ENCODE measurements at regions of chr6 and their contacts with region 1.

Region 1: DNA sequence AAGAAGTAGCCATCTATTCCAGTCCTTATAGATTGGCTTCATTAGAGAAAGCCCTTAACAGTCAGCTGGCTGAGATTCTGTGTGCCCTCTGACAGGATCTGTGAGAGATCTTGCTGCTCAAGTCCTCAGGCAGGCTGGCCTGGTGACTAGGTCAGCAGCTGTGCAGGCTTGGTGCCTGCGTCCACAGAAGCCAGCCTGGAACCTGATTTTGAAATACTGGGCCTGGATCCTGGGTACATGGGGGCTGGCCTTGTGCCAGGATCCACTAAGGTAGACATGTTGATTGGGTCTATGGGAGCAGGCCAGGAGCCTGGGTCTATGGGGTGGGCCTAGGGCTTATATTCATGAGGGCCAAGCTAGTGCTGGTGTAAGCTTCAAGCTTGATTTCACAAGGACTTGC is 381.8 kb upstream of the MARCKS start:
- H3K4me3 ChIP-seq: no peak overlapping the region
- H3K27ac ChIP-seq: no peak overlapping the region
- H3K4me1 ChIP-seq: no peaks in the 10 kb centered on the region
- CTCF ChIP-seq: no peak

Region 2: GRCh38 chr6:113461153-113461932 is 14.0 kb before region 1 on chr6:
- CTCF ChIA-PET with region 1: interaction called, 25 read pairs
- POLR2A ChIA-PET with region 1: no interaction called
- H3K4me3 ChIP-seq: no peak overlapping the region
- H3K27ac ChIP-seq: no peak overlapping the region
- H3K4me1 ChIP-seq: peaks cover 13% of the 10 kb centered on the region
- CTCF ChIP-seq: no peak

Measured in HEK293 (cell line).